ENCODE measurements at regions of chr7 and their contacts with region 1.

Region 1: DNA sequence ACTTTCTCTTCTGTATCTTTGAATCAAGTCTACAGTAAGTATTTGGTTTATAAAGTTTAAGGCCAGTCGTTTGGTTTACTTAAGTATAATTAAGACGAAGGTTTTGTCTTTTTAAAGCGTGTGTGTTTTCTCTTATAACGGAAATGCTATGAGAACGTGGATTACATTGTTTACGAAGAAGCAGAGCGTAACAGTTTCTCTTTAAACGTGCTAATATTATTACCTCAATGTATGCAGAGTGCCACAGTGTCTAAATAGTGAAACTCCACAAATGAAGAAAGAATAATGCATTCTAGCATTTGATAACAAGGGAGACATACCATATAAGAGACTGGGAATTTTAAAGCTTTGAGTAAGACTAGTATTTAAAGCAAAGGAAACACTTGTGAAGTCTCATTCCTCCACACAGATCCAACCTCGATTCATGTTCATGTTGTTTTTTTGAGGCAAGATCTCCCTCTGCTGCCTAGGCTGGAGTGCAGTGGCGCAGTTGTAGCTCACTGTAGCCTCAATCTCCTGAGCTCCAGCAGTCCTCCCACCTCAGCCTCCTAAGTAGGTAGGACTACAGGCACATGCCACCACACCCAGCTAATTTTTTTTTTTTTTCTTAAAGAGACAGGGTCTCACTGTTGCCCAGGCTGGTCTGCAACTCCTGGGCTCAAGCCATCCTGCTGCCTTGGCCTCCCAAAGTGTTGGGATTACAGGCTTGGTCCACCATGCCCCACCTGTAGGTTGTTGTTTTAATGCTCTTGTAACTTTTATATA is 75.1 kb downstream of the ANKRD61 start:
- DNase-seq: no peak

Region 2: DNA sequence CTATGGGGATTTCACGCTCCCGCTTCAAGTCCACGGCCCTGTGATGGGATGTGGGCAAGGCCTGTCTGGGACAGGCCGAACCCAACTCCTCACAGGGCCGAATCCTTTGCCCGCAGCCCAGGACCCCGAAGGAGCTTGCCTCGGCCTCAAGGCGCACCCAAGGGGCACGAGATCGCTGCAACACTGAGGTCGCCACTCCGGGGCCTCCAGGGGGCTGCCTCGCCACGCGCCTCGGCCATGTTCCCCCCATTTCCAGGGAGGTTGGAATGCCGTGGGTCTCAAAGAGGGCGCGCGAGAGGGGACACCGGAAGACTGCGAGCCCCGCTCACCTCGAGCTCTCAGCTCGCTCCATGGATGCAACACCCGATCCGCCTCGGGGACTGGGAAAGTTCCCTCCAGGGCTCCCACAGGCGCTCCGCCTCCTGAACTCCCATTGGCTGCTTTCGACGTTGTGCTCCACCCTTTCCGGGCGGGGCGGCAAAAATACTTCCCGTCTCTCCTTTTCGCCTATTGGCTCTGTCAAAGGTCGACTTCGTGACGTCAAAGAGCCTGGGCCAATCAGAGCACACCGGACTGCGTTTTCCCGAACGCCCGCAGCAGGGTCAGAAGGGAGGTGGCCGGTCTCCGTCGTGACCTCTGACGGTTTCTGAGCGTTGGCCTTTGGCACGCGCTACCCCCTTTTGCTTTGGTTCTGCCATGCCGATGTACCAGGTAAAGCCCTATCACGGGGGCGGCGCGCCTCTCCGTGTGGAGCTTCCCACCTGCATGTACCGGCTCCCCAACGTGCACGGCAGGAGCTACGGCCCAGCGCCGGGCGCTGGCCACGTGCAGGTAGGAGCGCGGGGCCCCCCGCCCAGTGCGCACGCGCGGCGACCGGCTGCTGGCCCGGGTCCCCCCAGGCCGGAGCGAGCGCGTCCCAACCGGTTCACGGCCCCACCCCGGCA is 97.4 kb before region 1 on chr7 and contains the starts of genes AIMP2 and PMS2:
- intact Hi-C with region 1: loop called (anchors 2 kb)
- DNase-seq: peak; percentile 97 to 100 (median 99)

Measured in posterior cingulate gyrus (tissue), 11 donors.